CD8-positive, alpha-beta T cell (primary cell): ENCODE measurements at regions of chr19 and their contacts with region 1.

Region 1: DNA sequence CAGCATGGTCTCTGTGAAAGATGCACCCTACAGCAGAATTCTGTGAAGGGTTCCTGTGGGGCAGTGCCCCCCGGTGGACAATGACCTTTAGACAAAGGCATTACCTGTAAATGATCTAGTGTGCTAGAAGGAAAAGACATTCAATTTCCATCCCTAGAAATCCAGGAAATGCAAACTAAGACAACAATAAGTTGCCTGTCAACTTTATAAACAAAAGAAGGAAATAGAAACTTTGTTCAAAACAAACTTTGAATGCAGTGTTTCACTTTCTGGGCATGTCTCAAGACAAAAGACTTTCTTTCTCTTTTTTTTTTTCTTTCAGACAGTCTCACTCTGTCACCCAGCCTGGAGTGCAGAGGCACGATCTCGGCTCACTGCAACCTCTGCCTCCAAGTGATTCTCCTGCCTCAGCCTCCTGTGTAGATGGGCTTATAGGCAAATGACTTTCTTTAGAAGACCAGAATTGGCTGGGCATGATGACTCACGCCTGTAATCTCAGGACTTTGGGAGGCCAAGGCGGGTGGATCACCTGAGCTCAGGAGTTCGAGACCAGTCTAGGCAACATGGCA is 15.5 kb downstream of the TEX101 start:
- DNase-seq: peak in 1 of 9 experiments; percentile 48
- ATAC-seq: no peak
- H3K4me3 ChIP-seq: no peak overlapping the region
- H3K4me3 Mint-ChIP-seq: no peak overlapping the region
- H3K27ac ChIP-seq: no peak overlapping the region
- H3K27ac Mint-ChIP-seq: no peak overlapping the region
- H3K4me1 ChIP-seq: peaks cover 7% of the 10 kb centered on the region
- H3K4me1 Mint-ChIP-seq: peaks cover 18% of the 10 kb centered on the region
- H3K27me3 ChIP-seq: no peaks in the 10 kb centered on the region
- H3K27me3 Mint-ChIP-seq: no peaks in the 10 kb centered on the region
- CTCF ChIP-seq: no peak

Region 2: DNA sequence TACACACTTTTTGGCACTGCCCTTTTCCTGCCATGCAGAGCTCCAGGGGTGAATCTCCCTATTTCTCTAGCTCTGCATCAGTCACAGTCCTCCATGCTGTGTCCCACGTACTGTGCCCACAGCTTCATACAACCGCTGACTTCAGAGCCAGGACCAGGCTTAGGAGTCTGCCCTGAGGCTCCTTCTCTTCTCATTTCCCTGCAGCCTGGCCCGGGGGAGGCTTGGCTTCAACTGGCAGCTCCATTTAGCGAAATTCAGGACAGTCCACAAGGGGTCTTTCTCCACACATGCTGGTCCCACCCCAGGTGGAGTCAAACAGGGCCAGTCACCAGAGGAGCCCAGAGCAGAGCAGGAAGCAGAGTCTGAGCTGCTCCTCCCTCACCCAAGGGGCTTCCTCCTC is 359.4 kb before region 1 on chr19:
- CTCF ChIA-PET with region 1: no interaction called
- POLR2A ChIA-PET with region 1: no interaction called
- intact Hi-C with region 1: no loop called
- DNase-seq: no peak
- ATAC-seq: no peak
- H3K4me3 ChIP-seq: no peak overlapping the region
- H3K4me3 Mint-ChIP-seq: no peak overlapping the region
- H3K27ac ChIP-seq: no peak overlapping the region
- H3K27ac Mint-ChIP-seq: no peak overlapping the region
- H3K4me1 ChIP-seq: no peaks in the 10 kb centered on the region
- H3K4me1 Mint-ChIP-seq: no peaks in the 10 kb centered on the region
- H3K27me3 ChIP-seq: no peaks in the 10 kb centered on the region
- H3K27me3 Mint-ChIP-seq: peaks cover 22% of the 10 kb centered on the region
- CTCF ChIP-seq: no peak

Region 3: GRCh38 chr19:43416951-43417623 is 13.1 kb before region 1 on chr19:
- CTCF ChIA-PET with region 1: interaction called, 15 read pairs
- POLR2A ChIA-PET with region 1: no interaction called
- intact Hi-C with region 1: no loop called
- DNase-seq: no peak
- ATAC-seq: no peak
- H3K4me3 ChIP-seq: no peak overlapping the region
- H3K4me3 Mint-ChIP-seq: no peak overlapping the region
- H3K27ac ChIP-seq: no peak overlapping the region
- H3K27ac Mint-ChIP-seq: no peak overlapping the region
- H3K4me1 ChIP-seq: no peaks in the 10 kb centered on the region
- H3K4me1 Mint-ChIP-seq: no peaks in the 10 kb centered on the region
- H3K27me3 ChIP-seq: no peaks in the 10 kb centered on the region
- H3K27me3 Mint-ChIP-seq: peaks cover 2% of the 10 kb centered on the region
- CTCF ChIP-seq: no peak

Region 4: GRCh38 chr19:43526884-43527859 is 96.9 kb after region 1 on chr19 and contains the start of gene ETHE1:
- CTCF ChIA-PET with region 1: interaction called, 158 read pairs
- POLR2A ChIA-PET with region 1: interaction called, 6 read pairs
- intact Hi-C with region 1: no loop called
- DNase-seq: peak in 8 of 9 experiments; percentile 57 to 81 (median 72)
- ATAC-seq: peak; percentile 76
- H3K4me3 ChIP-seq: peak within 1 kb of the TSS; percentile 88 to 93
- H3K4me3 Mint-ChIP-seq: peak within 1 kb of the TSS; percentile 94
- H3K27ac ChIP-seq: peak within 1 kb of the TSS; percentile 55 to 65
- H3K27ac Mint-ChIP-seq: peak within 1 kb of the TSS; percentile 73
- H3K4me1 ChIP-seq: peaks cover 16% of the 10 kb centered on the region
- H3K4me1 Mint-ChIP-seq: peaks cover 26% of the 10 kb centered on the region
- H3K27me3 ChIP-seq: no peaks in the 10 kb centered on the region
- H3K27me3 Mint-ChIP-seq: no peaks in the 10 kb centered on the region
- CTCF ChIP-seq: no peak
- total RNA-seq, gene ETHE1: 17.2 to 17.6 TPM

Region 5: GRCh38 chr19:44553478-44554171 is 1123.4 kb after region 1 on chr19:
- CTCF ChIA-PET with region 1: no interaction called
- POLR2A ChIA-PET with region 1: no interaction called
- intact Hi-C with region 1: no loop called
- DNase-seq: no peak
- ATAC-seq: no peak
- H3K4me3 ChIP-seq: no peak overlapping the region
- H3K4me3 Mint-ChIP-seq: no peak overlapping the region
- H3K27ac ChIP-seq: no peak overlapping the region
- H3K27ac Mint-ChIP-seq: no peak overlapping the region
- H3K4me1 ChIP-seq: no peaks in the 10 kb centered on the region
- H3K4me1 Mint-ChIP-seq: no peaks in the 10 kb centered on the region
- H3K27me3 ChIP-seq: no peaks in the 10 kb centered on the region
- H3K27me3 Mint-ChIP-seq: peaks cover 18% of the 10 kb centered on the region
- CTCF ChIP-seq: no peak